Activated T-helper 2 cell treated with anti-CD3 and anti-CD28 coated beads, Interferon-gamma antibody, Interleukin-2, Interleukin-4, amounts not matched to agents 10 μg/mL and 5 μg/mL and 100 μg/mL, durations not matched to agents 14 hours and 24 hours and 36 hours (primary cell): ENCODE measurements at regions of chr2 and their contacts with region 1.

Region 1: DNA sequence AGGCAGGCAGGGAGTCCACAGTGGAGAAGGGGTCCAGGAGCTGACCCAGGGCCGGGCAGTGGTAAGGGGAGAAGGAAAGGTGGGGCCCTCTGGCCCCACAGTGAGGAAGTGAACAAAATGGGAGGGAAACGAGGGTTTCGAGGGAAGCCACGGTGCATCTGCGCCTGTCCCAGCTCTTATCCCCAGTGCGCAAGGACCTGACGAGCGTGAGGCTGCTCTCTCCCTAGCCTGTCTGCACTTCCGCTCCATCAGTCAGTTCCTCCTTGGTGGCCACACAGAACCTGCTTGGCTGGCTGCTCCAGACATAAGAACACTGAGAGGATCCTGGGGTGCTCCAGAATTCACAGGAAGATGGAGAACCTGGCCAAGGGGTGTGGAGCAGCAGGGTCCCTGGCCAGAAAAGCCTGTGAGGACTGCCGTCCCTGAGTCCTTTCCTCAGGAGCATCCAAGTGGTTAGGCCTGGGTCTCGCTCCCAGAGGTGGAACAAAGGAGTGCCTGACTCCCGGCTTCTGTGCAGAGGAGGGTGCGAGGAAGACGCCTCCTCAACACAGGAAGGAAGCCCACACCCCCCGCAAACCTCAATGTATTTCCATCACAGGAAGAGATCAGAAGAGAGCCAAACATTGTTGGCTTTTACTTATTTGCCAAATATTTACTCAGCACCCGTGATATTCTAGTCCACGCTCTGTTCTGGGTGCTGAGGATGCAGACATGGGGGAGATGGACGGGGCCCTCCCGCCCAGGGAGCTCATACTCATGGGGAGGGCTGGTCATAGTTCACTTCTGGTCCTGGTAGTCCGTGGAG is 43.7 kb upstream of the SEMA4C start:
- DNase-seq: peak; percentile 66
- H3K4me3 Mint-ChIP-seq: peak overlapping the region; percentile 68
- H3K27ac Mint-ChIP-seq: peak overlapping the region; percentile 87
- H3K4me1 Mint-ChIP-seq: peaks cover 32% of the 10 kb centered on the region
- H3K27me3 Mint-ChIP-seq: no peaks in the 10 kb centered on the region

Region 2: GRCh38 chr2:96291751-96292150 is 621.8 kb before region 1 on chr2:
- intact Hi-C with region 1: no loop called
- DNase-seq: no peak
- H3K4me3 Mint-ChIP-seq: no peak overlapping the region
- H3K27ac Mint-ChIP-seq: no peak overlapping the region
- H3K4me1 Mint-ChIP-seq: no peaks in the 10 kb centered on the region
- H3K27me3 Mint-ChIP-seq: no peaks in the 10 kb centered on the region

Region 3: GRCh38 chr2:96734880-96735583 is 178.6 kb before region 1 on chr2:
- intact Hi-C with region 1: no loop called
- DNase-seq: no peak
- H3K4me3 Mint-ChIP-seq: no peak overlapping the region
- H3K27ac Mint-ChIP-seq: no peak overlapping the region
- H3K4me1 Mint-ChIP-seq: peaks cover 17% of the 10 kb centered on the region
- H3K27me3 Mint-ChIP-seq: no peaks in the 10 kb centered on the region

Region 4: DNA sequence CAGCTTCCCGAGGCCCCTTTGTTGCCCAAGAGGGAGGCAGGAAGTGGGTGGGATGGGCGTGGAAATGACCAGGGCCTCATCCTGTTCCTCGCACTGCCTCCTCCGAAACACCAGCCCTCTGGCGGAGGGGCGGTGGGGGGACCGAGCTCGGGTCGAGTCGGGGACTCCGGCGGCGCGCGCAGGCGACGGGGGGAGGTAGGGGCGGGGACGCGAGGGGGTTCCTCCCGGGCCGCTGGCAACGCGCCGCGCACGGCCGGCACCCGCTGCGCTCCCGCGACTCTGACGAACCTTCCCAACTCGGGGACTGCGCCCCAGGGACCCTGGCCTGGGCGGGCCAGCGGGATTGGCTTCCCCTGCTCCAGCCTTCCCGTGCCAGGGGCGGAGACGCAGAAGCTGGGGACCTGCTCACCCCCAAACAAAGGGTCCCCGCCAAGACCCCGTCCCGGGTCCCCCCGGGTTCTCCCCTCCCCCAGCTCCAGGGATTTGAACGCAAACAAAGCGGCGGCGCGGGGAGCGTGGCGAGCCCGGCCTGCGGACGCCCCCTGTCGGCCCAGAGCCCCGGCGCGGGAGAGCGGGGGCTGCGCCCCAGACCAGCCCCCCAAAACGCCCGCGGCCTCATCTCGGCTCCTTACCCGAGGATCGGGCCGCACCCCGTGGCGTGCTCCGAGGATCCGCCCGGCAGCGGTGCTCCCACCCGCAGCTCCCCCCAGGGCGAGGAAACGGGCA is 44.9 kb before region 1 on chr2:
- intact Hi-C with region 1: loop called (anchors 2 kb)
- DNase-seq: peak; percentile 62
- H3K4me3 Mint-ChIP-seq: peak overlapping the region; percentile 84
- H3K27ac Mint-ChIP-seq: peak overlapping the region; percentile 77
- H3K4me1 Mint-ChIP-seq: peaks cover 19% of the 10 kb centered on the region
- H3K27me3 Mint-ChIP-seq: peaks cover 6% of the 10 kb centered on the region